Activated CD4-positive, alpha-beta memory T cell treated with anti-CD3 and anti-CD28 coated beads, Interleukin-2, amount 10 ng/mL, durations not matched to agents 7 days and 5 days (primary cell): ENCODE measurements at regions of chr2 and their contacts with region 1.

Region 1: GRCh38 chr2:113889471-113890252 is at the start of gene ACTR3:
- DNase-seq: peak; percentile 99
- H3K4me3 Mint-ChIP-seq: peak within 1 kb of the TSS; percentile 99
- H3K27ac Mint-ChIP-seq: peak within 1 kb of the TSS; percentile 99
- H3K4me1 Mint-ChIP-seq: peaks cover 70% of the 10 kb centered on the region
- H3K27me3 Mint-ChIP-seq: no peaks in the 10 kb centered on the region
- total RNA-seq, gene ACTR3: 580 to 592 TPM

Region 2: GRCh38 chr2:113876503-113877387 is 12.9 kb before region 1 on chr2:
- CTCF ChIA-PET with region 1: interaction called, 14 read pairs
- POLR2A ChIA-PET with region 1: interaction called, 113 read pairs
- DNase-seq: peak; percentile 78
- H3K4me3 Mint-ChIP-seq: peak overlapping the region; percentile 2
- H3K27ac Mint-ChIP-seq: peak overlapping the region; percentile 87
- H3K4me1 Mint-ChIP-seq: peaks cover 53% of the 10 kb centered on the region
- H3K27me3 Mint-ChIP-seq: no peaks in the 10 kb centered on the region